Body of pancreas (tissue), 4 donors: ENCODE measurements at regions of chr12 and their contacts with region 1.

Region 1: GRCh38 chr12:6662906-6663742 is at the start of gene ING4:
- DNase-seq: peak; percentile 98 to 99 (median 98)
- ATAC-seq: peak; percentile 100
- H3K4me3 ChIP-seq: peak within 1 kb of the TSS; percentile 60 to 73
- H3K27ac ChIP-seq: peak within 1 kb of the TSS; percentile 9 to 84 (median 66)
- H3K4me1 ChIP-seq: peaks cover 12% of the 10 kb centered on the region
- H3K27me3 ChIP-seq: no peaks in the 10 kb centered on the region
- CTCF ChIP-seq: peak in 1 of 7 experiments; percentile 22
- POLR2A ChIP-seq: peak in 2 of 3 donors; percentile 56 to 60
- total RNA-seq, gene ING4: 23.3 to 39.9 TPM

Region 2: GRCh38 chr12:6613776-6614512 is 49.2 kb before region 1 on chr12:
- intact Hi-C with region 1: loop called (anchors 10 kb)
- DNase-seq: peak; percentile 87 to 95 (median 92)
- ATAC-seq: peak; percentile 87
- H3K4me3 ChIP-seq: no peak overlapping the region
- H3K27ac ChIP-seq: peak overlapping the region; percentile 85 to 92 (median 90)
- H3K4me1 ChIP-seq: peaks cover 29% of the 10 kb centered on the region
- H3K27me3 ChIP-seq: no peaks in the 10 kb centered on the region
- CTCF ChIP-seq: peak in 2 of 7 experiments; percentile 11 to 15
- POLR2A ChIP-seq: peak in 2 of 3 donors; percentile 55 to 61